OCI-LY7 (cell line): ENCODE measurements at regions of chr16 and their contacts with region 1.

Region 1: GRCh38 chr16:12323007-12323758 is 346.6 kb downstream of the SNX29 start:
- DNase-seq: peak; percentile 85
- H3K4me3 ChIP-seq: peak overlapping the region; percentile 25
- H3K27ac ChIP-seq: peak overlapping the region; percentile 98
- H3K4me1 ChIP-seq: peaks cover 100% of the 10 kb centered on the region
- CTCF ChIP-seq: no peak

Region 2: GRCh38 chr16:11964761-11965551 is 358.2 kb before region 1 on chr16 and contains the start of gene TNFRSF17:
- CTCF ChIA-PET with region 1: no interaction called
- POLR2A ChIA-PET with region 1: no interaction called
- intact Hi-C with region 1: loop called (anchors 10 kb)
- DNase-seq: peak; percentile 93
- H3K4me3 ChIP-seq: peak within 1 kb of the TSS; percentile 68
- H3K27ac ChIP-seq: peak within 1 kb of the TSS; percentile 94
- H3K4me1 ChIP-seq: peaks cover 82% of the 10 kb centered on the region
- CTCF ChIP-seq: no peak
- total RNA-seq, gene TNFRSF17: 53.4 and 58.2 TPM in 2 replicates

Region 3: GRCh38 chr16:12240036-12240435 is 83.1 kb before region 1 on chr16:
- CTCF ChIA-PET with region 1: no interaction called
- POLR2A ChIA-PET with region 1: interaction called, 8 read pairs
- intact Hi-C with region 1: loop called (anchors 5 kb)
- DNase-seq: no peak
- H3K4me3 ChIP-seq: peak overlapping the region; percentile 3
- H3K27ac ChIP-seq: peak overlapping the region; percentile 57
- H3K4me1 ChIP-seq: peaks cover 88% of the 10 kb centered on the region
- CTCF ChIP-seq: no peak

Region 4: DNA sequence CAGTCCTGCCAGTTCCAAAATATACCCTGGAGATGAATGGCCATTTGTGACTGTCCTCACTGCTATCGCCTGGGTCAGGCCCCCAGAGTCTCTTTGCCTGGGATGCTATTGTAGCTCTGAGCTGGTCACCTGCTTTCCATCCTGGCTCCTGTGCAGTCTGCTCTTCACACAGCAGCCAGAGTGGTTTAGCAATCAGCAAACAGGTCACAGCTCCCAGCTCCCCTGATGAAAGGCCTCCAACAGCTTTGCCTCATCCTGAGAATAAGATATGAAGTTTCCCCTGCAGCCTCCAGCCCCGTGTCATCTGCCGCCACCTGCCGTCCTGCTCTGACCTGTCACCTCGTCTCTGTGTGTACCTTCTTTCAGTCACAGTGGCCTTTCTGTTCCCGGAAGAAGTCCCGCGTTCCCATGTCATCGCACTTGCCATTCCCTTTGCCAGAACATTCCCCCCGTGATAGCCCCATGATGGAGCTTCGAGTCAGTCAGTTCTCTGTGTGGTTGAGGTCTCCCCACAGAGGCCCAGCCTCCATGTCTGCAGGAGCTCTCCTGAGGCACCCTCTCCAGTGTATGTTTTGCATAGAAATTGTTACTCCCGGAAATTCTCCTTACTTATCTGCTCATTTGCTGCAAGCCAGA is 65.1 kb before region 1 on chr16:
- CTCF ChIA-PET with region 1: interaction called, 4 read pairs
- POLR2A ChIA-PET with region 1: interaction called, 4 read pairs
- intact Hi-C with region 1: loop called (anchors 2 kb)
- DNase-seq: peak; percentile 85
- H3K4me3 ChIP-seq: peak overlapping the region; percentile 45
- H3K27ac ChIP-seq: peak overlapping the region; percentile 97
- H3K4me1 ChIP-seq: peaks cover 85% of the 10 kb centered on the region
- CTCF ChIP-seq: peak; percentile 88

Region 5: DNA sequence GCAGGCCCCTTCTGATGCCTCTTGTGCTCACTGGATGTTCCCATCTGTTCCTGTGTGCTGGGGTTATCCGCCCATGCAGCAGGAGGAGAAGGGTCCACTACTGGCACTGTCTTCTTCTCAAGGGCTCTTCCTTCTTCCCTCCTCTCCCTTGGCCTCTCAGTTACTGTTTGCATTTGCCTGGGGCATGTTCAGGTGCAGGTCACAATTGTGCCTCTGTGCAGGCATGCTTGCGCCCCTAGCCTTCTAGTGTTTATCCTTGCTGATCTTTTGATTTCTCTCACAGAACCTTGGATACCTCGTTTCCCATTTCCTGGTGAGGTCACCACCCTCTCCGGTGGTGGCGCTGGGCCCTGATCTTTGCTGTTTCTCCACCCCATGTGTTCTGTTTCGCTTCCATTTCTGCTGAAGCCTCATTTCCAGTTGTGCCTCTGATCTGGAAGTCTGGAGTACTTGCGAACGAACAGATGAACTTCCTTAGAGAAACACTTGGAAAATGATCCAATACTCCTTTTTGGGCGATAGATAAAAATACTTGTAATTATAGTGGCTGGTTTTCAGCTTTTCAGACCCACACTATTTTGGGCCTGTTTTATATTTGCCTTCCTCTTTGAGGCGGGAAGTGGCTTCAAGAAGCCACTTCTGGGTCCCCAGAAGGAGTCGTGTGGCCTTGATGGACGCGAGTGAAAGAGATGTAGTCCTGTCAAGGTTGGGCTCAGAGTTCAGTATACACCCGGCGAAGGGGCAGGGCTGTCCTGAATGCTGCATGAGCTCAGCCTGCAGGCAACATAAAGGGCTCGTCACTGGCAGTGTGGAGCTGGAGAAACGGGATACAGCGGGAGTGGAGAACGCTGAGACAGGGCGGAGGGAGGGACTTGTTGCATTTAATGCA is 33.8 kb before region 1 on chr16:
- CTCF ChIA-PET with region 1: interaction called, 4 read pairs
- POLR2A ChIA-PET with region 1: interaction called, 26 read pairs
- intact Hi-C with region 1: loop called (anchors 1 kb)
- DNase-seq: peak; percentile 51
- H3K4me3 ChIP-seq: no peak overlapping the region
- H3K27ac ChIP-seq: peak overlapping the region; percentile 95
- H3K4me1 ChIP-seq: peaks cover 93% of the 10 kb centered on the region
- CTCF ChIP-seq: no peak

Region 6: GRCh38 chr16:12295395-12295794 is 27.8 kb before region 1 on chr16:
- CTCF ChIA-PET with region 1: interaction called, 4 read pairs
- POLR2A ChIA-PET with region 1: interaction called, 26 read pairs
- intact Hi-C with region 1: loop called (anchors 1 kb)
- DNase-seq: peak; percentile 67
- H3K4me3 ChIP-seq: peak overlapping the region; percentile 18
- H3K27ac ChIP-seq: peak overlapping the region; percentile 82
- H3K4me1 ChIP-seq: peaks cover 99% of the 10 kb centered on the region
- CTCF ChIP-seq: no peak

Region 7: GRCh38 chr16:12546918-12547607 is 223.9 kb after region 1 on chr16:
- CTCF ChIA-PET with region 1: no interaction called
- POLR2A ChIA-PET with region 1: interaction called, 5 read pairs
- intact Hi-C with region 1: loop called (anchors 5 kb)
- DNase-seq: peak; percentile 86
- H3K4me3 ChIP-seq: peak overlapping the region; percentile 64
- H3K27ac ChIP-seq: peak overlapping the region; percentile 98
- H3K4me1 ChIP-seq: peaks cover 100% of the 10 kb centered on the region
- CTCF ChIP-seq: no peak